Transverse colon (tissue), 4 donors: ENCODE measurements at regions of chr5 and their contacts with region 1.

Region 1: DNA sequence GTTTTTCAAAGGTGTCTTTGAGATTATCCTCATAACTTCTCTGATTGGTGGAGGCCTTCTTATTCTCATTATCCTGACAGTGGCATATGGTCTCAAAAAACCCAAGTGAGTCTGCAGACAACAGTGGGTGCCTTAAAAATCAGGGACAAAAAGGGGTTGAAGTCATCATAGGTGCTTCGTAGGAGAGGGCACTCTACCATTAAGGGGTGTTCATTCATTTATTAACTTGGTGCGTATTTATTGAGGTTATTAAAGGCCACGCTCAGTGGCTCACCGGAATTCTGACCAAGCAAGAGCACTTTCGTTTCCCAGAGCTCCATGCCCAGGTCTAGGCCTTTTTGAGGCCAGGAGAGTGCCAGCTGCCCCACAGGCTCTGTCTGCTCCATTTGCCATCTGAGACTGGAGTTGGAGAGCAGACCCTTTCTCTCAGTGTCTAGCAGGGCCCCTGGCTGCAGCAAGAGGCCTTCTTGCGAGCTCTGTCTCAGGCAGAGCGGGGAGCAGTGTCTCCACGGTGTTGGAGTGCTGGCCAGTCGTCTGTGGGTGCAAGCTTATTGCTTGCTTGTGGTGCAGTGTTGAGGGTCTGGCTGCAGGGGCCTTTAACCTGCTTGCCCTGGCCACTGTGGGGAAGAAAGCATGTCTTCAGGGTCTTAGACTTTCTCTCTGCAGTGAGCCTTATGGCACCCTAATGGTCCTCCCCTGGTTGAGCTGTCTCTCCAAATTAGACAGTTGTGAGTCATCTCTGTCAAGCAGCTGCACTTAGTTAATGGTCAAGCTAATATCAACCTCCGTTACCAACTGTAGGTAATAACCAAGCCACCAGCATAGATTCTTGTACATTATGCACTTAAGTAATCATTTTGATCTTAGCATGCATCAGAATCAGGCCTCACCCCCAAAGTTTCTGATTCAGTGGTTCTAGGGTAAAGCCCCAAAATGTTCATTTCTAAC is 62.6 kb downstream of the IL31RA start:
- DNase-seq: no peak
- H3K4me3 ChIP-seq: no peak overlapping the region
- H3K27ac ChIP-seq: no peak overlapping the region
- H3K4me1 ChIP-seq: no peaks in the 10 kb centered on the region
- H3K27me3 ChIP-seq: no peaks in the 10 kb centered on the region
- CTCF ChIP-seq: no peak
- EP300 ChIP-seq: no peak
- POLR2A ChIP-seq: no peak

Region 2: DNA sequence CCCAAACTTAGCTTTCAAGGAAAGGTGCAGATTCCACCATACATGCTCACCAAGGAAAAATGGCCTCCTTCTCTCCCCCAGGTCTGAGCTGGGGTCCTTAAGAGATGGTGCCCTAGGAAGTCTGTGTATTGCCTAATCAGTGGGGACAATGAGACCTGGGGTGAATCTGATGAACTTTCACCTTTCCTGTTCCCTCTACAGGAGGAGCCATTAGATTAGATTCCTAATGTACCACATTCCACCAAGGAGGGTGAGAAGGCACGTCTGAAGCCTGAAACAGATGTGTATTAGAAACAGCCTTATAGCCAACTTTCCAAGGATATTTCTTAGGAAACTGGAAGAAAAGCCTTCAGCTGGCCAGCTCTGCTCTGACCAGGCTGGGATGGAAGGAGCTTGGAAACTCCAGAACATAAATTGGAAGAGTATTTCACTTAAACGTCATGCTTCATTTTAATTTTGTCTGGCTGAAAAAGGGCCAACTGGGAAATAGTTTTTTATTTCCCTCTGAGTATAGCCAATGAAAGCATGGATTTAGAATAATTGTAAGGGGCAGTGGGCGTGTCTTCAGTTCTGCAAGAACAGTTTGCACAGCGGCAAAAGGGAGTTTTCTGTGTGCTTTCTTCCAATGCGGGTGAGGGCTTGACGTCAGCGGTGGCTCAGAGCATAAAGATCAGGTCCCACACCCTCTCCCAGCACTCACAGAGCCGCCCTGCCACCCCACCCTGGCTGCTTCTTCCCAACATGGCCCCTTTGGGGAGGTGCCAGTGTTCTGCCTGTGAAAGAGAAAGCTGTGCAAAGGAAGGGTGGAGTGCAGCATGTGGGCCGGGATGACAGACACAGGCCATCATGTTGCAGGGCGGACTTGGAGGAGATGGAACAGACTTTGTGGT is 1139.2 kb before region 1 on chr5:
- in situ Hi-C with region 1: no loop called
- intact Hi-C with region 1: loop called (anchors 5 kb)
- DNase-seq: peak; percentile 30
- H3K4me3 ChIP-seq: no peak overlapping the region
- H3K27ac ChIP-seq: no peak overlapping the region
- H3K4me1 ChIP-seq: no peaks in the 10 kb centered on the region
- H3K27me3 ChIP-seq: no peaks in the 10 kb centered on the region
- CTCF ChIP-seq: no peak
- EP300 ChIP-seq: no peak
- POLR2A ChIP-seq: no peak

Region 3: GRCh38 chr5:55868846-55869245 is 44.9 kb before region 1 on chr5:
- in situ Hi-C with region 1: no loop called
- intact Hi-C with region 1: no loop called
- DNase-seq: no peak
- H3K4me3 ChIP-seq: no peak overlapping the region
- H3K27ac ChIP-seq: no peak overlapping the region
- H3K4me1 ChIP-seq: no peaks in the 10 kb centered on the region
- H3K27me3 ChIP-seq: no peaks in the 10 kb centered on the region
- CTCF ChIP-seq: no peak
- EP300 ChIP-seq: no peak
- POLR2A ChIP-seq: no peak